Endothelial cell of umbilical vein (primary cell): ENCODE measurements at regions of chr7 and their contacts with region 1.

Region 1: DNA sequence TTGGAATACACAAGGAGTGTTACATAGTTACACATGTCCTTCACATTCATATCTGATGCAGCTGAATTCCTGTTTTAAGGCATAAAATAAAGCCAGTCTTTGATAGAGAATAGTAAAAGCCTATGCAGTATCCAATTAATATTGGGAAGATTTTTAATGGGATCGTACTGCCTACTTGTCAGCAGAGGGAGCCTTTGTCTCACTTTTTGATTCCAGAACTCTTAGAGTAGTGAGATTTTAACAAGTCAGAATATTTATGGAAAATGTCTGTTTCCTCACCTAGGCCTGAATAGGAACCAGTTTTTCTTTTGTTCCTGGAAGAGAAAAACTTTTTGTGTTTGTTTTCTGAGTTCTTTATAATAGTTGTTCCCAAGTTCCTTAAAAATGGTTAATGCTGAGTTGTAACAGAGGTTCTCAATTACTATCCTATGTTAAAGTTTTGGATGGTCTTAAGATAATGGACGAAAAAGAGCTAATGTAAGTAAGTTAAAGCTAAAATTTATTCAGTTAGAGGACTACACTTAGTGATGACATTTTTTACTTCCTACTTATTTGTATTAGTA is 114.0 kb downstream of the BBS9 start:
- DNase-seq: peak; percentile 65
- H3K4me3 ChIP-seq: no peak overlapping the region
- H3K27ac ChIP-seq: no peak overlapping the region
- H3K4me1 ChIP-seq: no peaks in the 10 kb centered on the region
- H3K27me3 ChIP-seq: no peaks in the 10 kb centered on the region
- CTCF ChIP-seq: peak; percentile 39 to 42
- POLR2A ChIP-seq: no peak

Region 2: DNA sequence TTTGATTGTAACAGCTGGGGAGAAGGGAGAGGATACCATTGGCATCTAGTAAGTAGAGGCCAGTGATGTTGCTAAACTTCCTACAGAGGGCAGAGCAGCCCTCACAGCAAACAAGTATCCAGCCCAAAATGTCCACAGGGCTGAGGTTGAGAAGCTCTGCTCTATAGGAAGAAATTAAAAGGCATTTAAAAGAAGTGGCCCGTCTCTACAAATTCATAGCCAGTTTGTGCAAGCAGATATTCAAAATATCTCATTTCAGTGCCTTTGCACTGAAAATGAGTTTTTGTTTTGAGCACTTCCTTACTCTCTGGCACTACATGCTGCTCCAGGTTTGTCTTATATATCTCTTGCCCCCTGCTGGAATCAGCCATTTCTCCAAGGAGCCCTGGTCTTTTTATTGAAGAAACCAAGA is 215.9 kb after region 1 on chr7:
- CTCF ChIA-PET with region 1: interaction called, 8 read pairs
- POLR2A ChIA-PET with region 1: no interaction called
- dilution Hi-C with region 1: no loop called
- intact Hi-C with region 1: loop called (anchors 2 kb)
- DNase-seq: peak; percentile 74
- H3K4me3 ChIP-seq: no peak overlapping the region
- H3K27ac ChIP-seq: no peak overlapping the region
- H3K4me1 ChIP-seq: no peaks in the 10 kb centered on the region
- H3K27me3 ChIP-seq: no peaks in the 10 kb centered on the region
- CTCF ChIP-seq: peak; percentile 38 to 59
- POLR2A ChIP-seq: no peak

Region 3: GRCh38 chr7:33591490-33592065 is 348.2 kb after region 1 on chr7:
- CTCF ChIA-PET with region 1: no interaction called
- POLR2A ChIA-PET with region 1: no interaction called
- dilution Hi-C with region 1: no loop called
- intact Hi-C with region 1: no loop called
- DNase-seq: peak; percentile 69
- H3K4me3 ChIP-seq: no peak overlapping the region
- H3K27ac ChIP-seq: peak overlapping the region; percentile 27
- H3K4me1 ChIP-seq: peaks cover 17% of the 10 kb centered on the region
- H3K27me3 ChIP-seq: no peaks in the 10 kb centered on the region
- CTCF ChIP-seq: no peak
- POLR2A ChIP-seq: no peak

Region 4: GRCh38 chr7:33744293-33745075 is 501.1 kb after region 1 on chr7:
- CTCF ChIA-PET with region 1: interaction called, 5 read pairs
- POLR2A ChIA-PET with region 1: no interaction called
- dilution Hi-C with region 1: no loop called
- intact Hi-C with region 1: loop called (anchors 5 kb)
- DNase-seq: peak; percentile 34
- H3K4me3 ChIP-seq: no peak overlapping the region
- H3K27ac ChIP-seq: no peak overlapping the region
- H3K4me1 ChIP-seq: peaks cover 11% of the 10 kb centered on the region
- H3K27me3 ChIP-seq: no peaks in the 10 kb centered on the region
- CTCF ChIP-seq: peak; percentile 32 to 40
- POLR2A ChIP-seq: no peak

Region 5: DNA sequence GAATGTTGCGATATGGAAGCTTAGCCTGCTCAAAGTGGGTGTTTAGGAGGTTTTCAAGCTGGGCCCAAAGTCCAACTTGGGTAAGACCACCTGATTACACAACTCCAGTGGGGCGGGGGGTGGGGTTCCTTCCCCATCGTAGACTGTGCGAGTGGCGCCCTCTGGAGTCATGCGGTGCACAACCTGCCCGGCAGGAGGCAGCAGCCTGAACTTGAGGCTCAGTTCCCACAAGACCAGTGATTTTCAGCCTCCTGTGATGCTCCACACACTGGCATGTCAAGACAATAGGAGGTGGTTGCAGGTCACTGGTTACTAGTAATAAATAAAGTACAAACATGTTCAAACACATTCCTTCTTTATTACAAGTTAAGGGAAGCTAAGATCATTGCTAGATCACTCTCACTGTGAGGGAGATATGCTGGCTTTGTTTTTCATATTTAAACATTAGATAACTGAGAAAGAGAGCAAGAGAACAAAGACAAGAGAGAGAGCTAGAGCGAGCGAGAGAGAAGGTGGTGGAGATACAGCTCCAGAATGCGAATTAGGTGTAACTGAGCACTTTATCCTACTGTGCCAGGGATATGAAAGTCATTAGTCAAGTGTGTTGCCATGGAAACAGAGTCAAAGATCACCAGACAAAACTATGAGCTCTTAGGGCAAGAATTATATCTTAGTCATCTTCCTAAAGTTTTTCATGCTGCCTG is 564.5 kb after region 1 on chr7:
- CTCF ChIA-PET with region 1: interaction called, 8 read pairs
- POLR2A ChIA-PET with region 1: no interaction called
- dilution Hi-C with region 1: no loop called
- intact Hi-C with region 1: loop called (anchors 5 kb)
- DNase-seq: peak; percentile 91
- H3K4me3 ChIP-seq: no peak overlapping the region
- H3K27ac ChIP-seq: peak overlapping the region; percentile 81
- H3K4me1 ChIP-seq: peaks cover 27% of the 10 kb centered on the region
- H3K27me3 ChIP-seq: no peaks in the 10 kb centered on the region
- CTCF ChIP-seq: peak; percentile 62 to 66
- POLR2A ChIP-seq: no peak

Region 6: GRCh38 chr7:33904681-33905388 is 661.4 kb after region 1 on chr7:
- CTCF ChIA-PET with region 1: interaction called, 10 read pairs
- POLR2A ChIA-PET with region 1: no interaction called
- dilution Hi-C with region 1: no loop called
- intact Hi-C with region 1: no loop called
- DNase-seq: peak; percentile 47
- H3K4me3 ChIP-seq: peak overlapping the region; percentile 49 to 71 (median 69)
- H3K27ac ChIP-seq: no peak overlapping the region
- H3K4me1 ChIP-seq: peaks cover 11% of the 10 kb centered on the region
- H3K27me3 ChIP-seq: peaks cover 15 to 36% of the 10 kb centered on the region in 2 experiments
- CTCF ChIP-seq: peak; percentile 9 to 35
- POLR2A ChIP-seq: no peak

Region 7: GRCh38 chr7:34165929-34166550 is 922.6 kb after region 1 on chr7:
- CTCF ChIA-PET with region 1: no interaction called
- POLR2A ChIA-PET with region 1: no interaction called
- dilution Hi-C with region 1: no loop called
- intact Hi-C with region 1: loop called (anchors 1 kb)
- DNase-seq: peak; percentile 37
- H3K4me3 ChIP-seq: no peak overlapping the region
- H3K27ac ChIP-seq: no peak overlapping the region
- H3K4me1 ChIP-seq: no peaks in the 10 kb centered on the region
- H3K27me3 ChIP-seq: peaks cover 0 to 2% of the 10 kb centered on the region in 2 experiments
- CTCF ChIP-seq: peak; percentile 37 to 59
- POLR2A ChIP-seq: no peak